ENCODE measurements at regions of chr13 and their contacts with region 1.

Region 1: DNA sequence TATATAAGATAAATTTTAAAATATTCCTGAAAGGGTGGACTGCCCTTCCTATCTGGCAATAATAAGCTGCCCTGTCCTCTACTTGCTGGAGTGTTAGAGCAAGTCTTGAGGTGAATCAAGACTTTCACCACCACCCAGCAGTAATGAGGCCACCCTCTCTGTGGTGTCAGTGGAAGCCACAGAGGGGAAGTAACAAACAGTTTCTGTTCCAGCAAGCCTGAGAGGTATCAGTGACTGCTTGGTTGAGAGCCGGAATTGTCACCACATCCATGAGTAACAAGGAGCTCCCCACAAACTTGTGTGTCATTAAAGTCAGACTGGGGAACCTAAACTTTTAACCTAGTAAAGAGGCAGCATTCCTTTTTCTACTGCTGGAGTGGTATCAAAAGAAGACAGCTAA is 532.7 kb upstream of the SPRY2 start:
- DNase-seq: no peak
- H3K4me3 ChIP-seq: no peak overlapping the region
- H3K27ac ChIP-seq: no peak overlapping the region
- H3K4me1 ChIP-seq: peaks cover 9% of the 10 kb centered on the region
- H3K27me3 ChIP-seq: no peaks in the 10 kb centered on the region
- CTCF ChIP-seq: no peak
- POLR2A ChIP-seq: no peak

Region 2: GRCh38 chr13:80742033-80742432 is 131.6 kb before region 1 on chr13:
- CTCF ChIA-PET with region 1: no interaction called
- POLR2A ChIA-PET with region 1: no interaction called
- dilution Hi-C with region 1: no loop called
- intact Hi-C with region 1: loop called (anchors 2 kb)
- DNase-seq: peak; percentile 66
- H3K4me3 ChIP-seq: no peak overlapping the region
- H3K27ac ChIP-seq: no peak overlapping the region
- H3K4me1 ChIP-seq: peaks cover 7% of the 10 kb centered on the region
- H3K27me3 ChIP-seq: no peaks in the 10 kb centered on the region
- CTCF ChIP-seq: no peak
- POLR2A ChIP-seq: no peak

Region 3: GRCh38 chr13:80923907-80924306 is 50.3 kb after region 1 on chr13:
- CTCF ChIA-PET with region 1: interaction called, 3 read pairs
- POLR2A ChIA-PET with region 1: no interaction called
- dilution Hi-C with region 1: no loop called
- intact Hi-C with region 1: loop called (anchors 1 kb)
- DNase-seq: peak; percentile 22
- H3K4me3 ChIP-seq: no peak overlapping the region
- H3K27ac ChIP-seq: peak overlapping the region; percentile 65
- H3K4me1 ChIP-seq: peaks cover 27% of the 10 kb centered on the region
- H3K27me3 ChIP-seq: no peaks in the 10 kb centered on the region
- CTCF ChIP-seq: no peak
- POLR2A ChIP-seq: no peak